ENCODE measurements at regions of chr7 and their contacts with region 1.

Region 1: DNA sequence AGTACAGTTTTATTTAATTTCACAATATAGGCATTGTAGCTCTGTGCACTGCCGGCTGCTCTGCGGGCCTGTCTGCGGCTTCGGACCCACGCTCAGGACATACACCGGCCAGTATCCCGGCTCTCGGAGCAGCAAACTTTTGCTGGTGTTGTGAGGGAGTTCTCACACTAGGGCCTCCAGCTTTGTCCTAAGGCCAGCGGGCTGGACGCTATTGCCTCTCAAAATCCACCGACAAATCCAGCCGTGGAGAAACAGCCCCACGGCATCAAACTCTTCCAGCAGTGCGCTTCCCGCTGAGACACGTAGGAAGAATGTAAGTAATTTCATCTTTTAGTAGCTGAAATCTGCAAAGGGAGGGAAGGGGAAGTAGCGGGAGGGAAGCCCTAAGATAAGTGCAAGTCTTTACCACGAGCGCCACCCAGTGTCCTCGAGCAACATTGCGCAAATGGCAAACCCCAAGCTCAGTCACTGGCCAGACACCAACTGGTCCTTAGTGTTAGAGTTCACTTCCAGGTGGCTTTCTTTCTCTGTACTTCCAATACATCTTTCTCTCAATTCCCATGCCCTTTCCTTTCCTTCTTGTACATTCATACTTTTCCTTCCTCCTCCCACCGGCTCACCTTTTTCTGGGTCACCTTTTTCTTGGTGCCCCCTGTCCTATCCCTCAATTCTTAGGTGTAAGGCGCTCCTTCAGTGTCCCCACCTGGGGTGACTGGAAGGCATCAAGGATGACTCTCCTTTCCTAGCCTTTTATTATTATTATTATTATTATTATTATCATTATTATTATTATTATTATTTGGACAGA is 3.0 kb upstream of the DLX5 start:
- DNase-seq: peak; percentile 87
- ATAC-seq: peak; percentile 86

Region 2: GRCh38 chr7:95916573-95917297 is 1110.9 kb before region 1 on chr7:
- intact Hi-C with region 1: loop called (anchors 10 kb)
- DNase-seq: peak; percentile 93
- ATAC-seq: peak; percentile 92

Region 3: GRCh38 chr7:96061844-96062243 is 965.8 kb before region 1 on chr7:
- intact Hi-C with region 1: loop called (anchors 10 kb)
- DNase-seq: no peak
- ATAC-seq: no peak

Region 4: GRCh38 chr7:98493030-98493778 is 1465.6 kb after region 1 on chr7:
- intact Hi-C with region 1: no loop called
- DNase-seq: no peak
- ATAC-seq: no peak